ENCODE measurements at regions of chr3 and their contacts with region 1.

Region 1: DNA sequence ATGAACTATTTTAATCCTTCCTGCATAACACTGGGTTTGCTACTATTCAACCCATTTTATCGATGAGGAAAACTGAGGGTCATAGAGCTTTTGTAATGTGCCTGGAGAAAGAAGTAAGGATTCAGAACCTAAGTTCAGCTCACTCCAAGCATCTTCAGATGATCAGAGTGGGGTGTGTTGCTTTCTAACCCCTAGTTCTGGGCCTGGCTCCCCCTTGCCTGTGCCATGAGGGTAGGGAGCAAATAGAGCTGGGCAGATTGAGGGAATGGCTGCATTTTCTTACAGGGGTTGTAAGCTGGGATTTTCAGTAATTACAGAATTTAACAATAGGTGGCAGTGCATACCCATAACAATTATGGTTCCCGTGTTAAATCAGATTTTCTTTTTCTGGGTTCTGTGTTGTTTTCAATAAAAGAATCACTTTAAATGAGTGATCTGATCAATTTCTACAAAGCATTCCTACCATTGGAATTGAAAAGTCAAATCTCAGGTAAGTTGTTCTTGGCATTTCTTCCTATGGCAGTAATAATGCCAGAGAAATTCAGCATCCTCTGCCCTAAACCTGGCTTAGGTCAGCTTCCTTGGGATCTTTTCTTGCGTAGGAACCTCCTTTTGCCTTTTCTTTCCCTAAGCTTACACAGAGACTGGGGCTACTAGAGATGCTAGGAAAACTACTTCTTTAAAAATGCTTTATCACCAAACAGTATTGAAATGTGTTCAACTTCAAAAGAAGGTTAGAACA is 103.8 kb upstream of the IL12A start:
- DNase-seq: no peak
- H3K4me3 ChIP-seq: no peak overlapping the region
- H3K27ac ChIP-seq: no peak overlapping the region
- H3K4me1 ChIP-seq: peaks cover 33% of the 10 kb centered on the region
- H3K27me3 ChIP-seq: no peaks in the 10 kb centered on the region
- CTCF ChIP-seq: peak; percentile 30 to 50

Region 2: DNA sequence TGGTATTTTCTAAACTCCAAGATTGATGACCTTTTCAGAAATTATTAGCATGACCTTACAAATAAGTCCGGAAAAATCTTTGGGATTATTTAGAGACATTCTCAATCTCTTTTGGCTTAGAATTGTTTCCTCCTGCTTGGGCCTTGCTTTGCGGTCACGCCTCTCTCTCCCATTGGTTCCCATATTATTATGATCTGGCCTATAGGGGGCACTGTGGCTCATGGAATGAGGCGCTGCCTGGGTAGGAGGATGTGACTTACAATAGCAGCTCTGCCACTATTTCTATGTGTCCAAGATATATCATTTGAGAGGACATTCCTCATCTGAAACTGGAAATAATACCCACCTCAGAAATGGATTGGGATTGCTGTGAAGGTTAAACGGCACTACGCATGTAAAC is 618.1 kb before region 1 on chr3:
- CTCF ChIA-PET with region 1: no interaction called
- dilution Hi-C with region 1: no loop called
- in situ Hi-C with region 1: no loop called
- intact Hi-C with region 1: loop called (anchors 5 kb)
- DNase-seq: peak; percentile 42
- H3K4me3 ChIP-seq: no peak overlapping the region
- H3K27ac ChIP-seq: no peak overlapping the region
- H3K4me1 ChIP-seq: no peaks in the 10 kb centered on the region
- H3K27me3 ChIP-seq: peaks cover 2% of the 10 kb centered on the region
- CTCF ChIP-seq: peak; percentile 52 to 58

Region 3: DNA sequence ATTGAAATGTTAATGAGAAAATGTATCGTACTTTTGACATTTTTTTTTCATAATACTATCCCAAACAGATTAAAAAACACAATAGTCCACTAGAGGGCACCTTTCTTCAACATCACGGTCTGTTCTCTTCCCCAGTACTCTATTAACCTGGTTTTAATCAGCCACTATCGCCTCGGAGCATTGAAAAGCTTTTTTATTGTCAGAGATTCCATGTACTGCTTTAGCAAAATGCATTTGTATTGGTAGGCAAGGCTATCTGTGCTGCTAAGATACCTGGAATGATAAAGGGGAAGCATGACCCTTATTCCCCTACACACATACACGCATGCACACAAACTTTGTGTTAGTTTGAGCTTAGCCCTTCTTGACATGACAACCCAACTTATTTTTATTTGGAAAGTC is 56.3 kb before region 1 on chr3:
- CTCF ChIA-PET with region 1: interaction called, 8 read pairs
- dilution Hi-C with region 1: no loop called
- in situ Hi-C with region 1: loop called in 1 of 2 experiments (anchors 10 kb)
- intact Hi-C with region 1: loop called (anchors 1 kb)
- DNase-seq: peak; percentile 47
- H3K4me3 ChIP-seq: no peak overlapping the region
- H3K27ac ChIP-seq: peak overlapping the region; percentile 27
- H3K4me1 ChIP-seq: peaks cover 55% of the 10 kb centered on the region
- H3K27me3 ChIP-seq: no peaks in the 10 kb centered on the region
- CTCF ChIP-seq: peak; percentile 46 to 51

Region 4: GRCh38 chr3:159852821-159853505 is 31.9 kb before region 1 on chr3:
- CTCF ChIA-PET with region 1: no interaction called
- dilution Hi-C with region 1: no loop called
- in situ Hi-C with region 1: no loop called
- intact Hi-C with region 1: loop called (anchors 1 kb)
- DNase-seq: peak; percentile 66
- H3K4me3 ChIP-seq: peak overlapping the region; percentile 4 to 39 (median 30)
- H3K27ac ChIP-seq: peak overlapping the region; percentile 91
- H3K4me1 ChIP-seq: peaks cover 52% of the 10 kb centered on the region
- H3K27me3 ChIP-seq: no peaks in the 10 kb centered on the region
- CTCF ChIP-seq: no peak

Region 5: DNA sequence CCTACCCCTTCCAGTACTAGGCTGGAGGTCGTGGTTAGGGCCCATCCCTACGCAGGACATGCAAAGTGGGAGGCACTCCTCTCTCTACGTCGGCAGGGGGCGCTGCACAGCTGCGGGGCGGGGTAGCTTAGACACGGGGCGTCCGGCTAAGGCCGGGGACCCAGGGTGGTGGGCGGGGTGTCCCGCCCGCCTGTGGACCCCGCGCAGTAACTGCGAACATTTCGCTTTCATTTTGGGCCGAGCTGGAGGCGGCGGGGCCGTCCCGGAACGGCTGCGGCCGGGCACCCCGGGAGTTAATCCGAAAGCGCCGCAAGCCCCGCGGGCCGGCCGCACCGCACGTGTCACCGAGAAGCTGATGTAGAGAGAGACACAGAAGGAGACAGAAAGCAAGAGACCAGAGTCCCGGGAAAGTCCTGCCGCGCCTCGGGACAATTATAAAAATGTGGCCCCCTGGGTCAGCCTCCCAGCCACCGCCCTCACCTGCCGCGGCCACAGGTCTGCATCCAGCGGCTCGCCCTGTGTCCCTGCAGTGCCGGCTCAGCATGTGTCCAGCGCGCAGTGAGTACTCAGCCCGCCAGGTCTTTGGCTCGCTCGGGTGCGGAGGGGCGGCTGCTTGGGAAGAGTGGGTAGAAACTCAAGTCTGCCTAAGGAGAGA is 103.9 kb after region 1 on chr3 and contains the start of gene IL12A:
- CTCF ChIA-PET with region 1: interaction called, 4 read pairs
- dilution Hi-C with region 1: loop called (anchors 5 kb)
- in situ Hi-C with region 1: no loop called
- intact Hi-C with region 1: loop called (anchors 5 kb)
- DNase-seq: peak; percentile 54
- H3K4me3 ChIP-seq: peak within 1 kb of the TSS; percentile 64 to 79 (median 79)
- H3K27ac ChIP-seq: no peak within 1 kb of the TSS
- H3K4me1 ChIP-seq: peaks cover 19% of the 10 kb centered on the region
- H3K27me3 ChIP-seq: no peaks in the 10 kb centered on the region
- CTCF ChIP-seq: peak; percentile 83 to 95
- total RNA-seq, gene IL12A: 0.83 to 1.3 TPM

Region 6: GRCh38 chr3:160003520-160004128 is 118.8 kb after region 1 on chr3:
- CTCF ChIA-PET with region 1: interaction called, 9 read pairs
- dilution Hi-C with region 1: no loop called
- in situ Hi-C with region 1: loop called (anchors 5 kb)
- intact Hi-C with region 1: loop called (anchors 1 kb)
- DNase-seq: peak; percentile 41
- H3K4me3 ChIP-seq: no peak overlapping the region
- H3K27ac ChIP-seq: no peak overlapping the region
- H3K4me1 ChIP-seq: no peaks in the 10 kb centered on the region
- H3K27me3 ChIP-seq: no peaks in the 10 kb centered on the region
- CTCF ChIP-seq: peak; percentile 44 to 69

Measured in mammary epithelial cell (primary cell).